CD4-positive, alpha-beta memory T cell (primary cell): ENCODE measurements at regions of chr6 and their contacts with region 1.

Region 1: GRCh38 chr6:127737009-127737486 is 160.1 kb downstream of the C6orf58 start:
- DNase-seq: peak; percentile 41 to 69 (median 64)
- H3K4me3 ChIP-seq: no peak overlapping the region
- H3K4me3 Mint-ChIP-seq: peak overlapping the region in 1 of 8 donors; percentile 48
- H3K27ac ChIP-seq: no peak overlapping the region
- H3K27ac Mint-ChIP-seq: peak overlapping the region in 6 of 7 donors; percentile 9 to 59 (median 52)
- H3K4me1 ChIP-seq: peaks cover 8% of the 10 kb centered on the region
- H3K4me1 Mint-ChIP-seq: peaks cover 33 to 59% (median 51%) of the 10 kb centered on the region in 4 donors
- H3K27me3 ChIP-seq: no peaks in the 10 kb centered on the region
- H3K27me3 Mint-ChIP-seq: no peaks in the 10 kb centered on the region

Region 2: GRCh38 chr6:127570739-127571389 is 166.2 kb before region 1 on chr6:
- CTCF ChIA-PET with region 1: no interaction called
- POLR2A ChIA-PET with region 1: no interaction called
- intact Hi-C with region 1: no loop called
- DNase-seq: no peak
- H3K4me3 ChIP-seq: no peak overlapping the region
- H3K4me3 Mint-ChIP-seq: no peak overlapping the region
- H3K27ac ChIP-seq: no peak overlapping the region
- H3K27ac Mint-ChIP-seq: peak overlapping the region in 1 of 7 donors; percentile 31
- H3K4me1 ChIP-seq: no peaks in the 10 kb centered on the region
- H3K4me1 Mint-ChIP-seq: peaks cover 6 to 9% (median 8%) of the 10 kb centered on the region in 4 donors
- H3K27me3 ChIP-seq: no peaks in the 10 kb centered on the region
- H3K27me3 Mint-ChIP-seq: no peaks in the 10 kb centered on the region

Region 3: GRCh38 chr6:127792616-127793015 is 55.6 kb after region 1 on chr6:
- CTCF ChIA-PET with region 1: no interaction called
- POLR2A ChIA-PET with region 1: no interaction called
- intact Hi-C with region 1: no loop called
- DNase-seq: peak in 4 of 5 donors; percentile 9 to 31 (median 22)
- H3K4me3 ChIP-seq: no peak overlapping the region
- H3K4me3 Mint-ChIP-seq: peak overlapping the region in 6 of 8 donors; percentile 21 to 72 (median 49)
- H3K27ac ChIP-seq: no peak overlapping the region
- H3K27ac Mint-ChIP-seq: peak overlapping the region in 6 of 7 donors; percentile 47 to 82 (median 73)
- H3K4me1 ChIP-seq: peaks cover 81% of the 10 kb centered on the region
- H3K4me1 Mint-ChIP-seq: peaks cover 68 to 93% (median 80%) of the 10 kb centered on the region in 4 donors
- H3K27me3 ChIP-seq: no peaks in the 10 kb centered on the region
- H3K27me3 Mint-ChIP-seq: no peaks in the 10 kb centered on the region

Region 4: DNA sequence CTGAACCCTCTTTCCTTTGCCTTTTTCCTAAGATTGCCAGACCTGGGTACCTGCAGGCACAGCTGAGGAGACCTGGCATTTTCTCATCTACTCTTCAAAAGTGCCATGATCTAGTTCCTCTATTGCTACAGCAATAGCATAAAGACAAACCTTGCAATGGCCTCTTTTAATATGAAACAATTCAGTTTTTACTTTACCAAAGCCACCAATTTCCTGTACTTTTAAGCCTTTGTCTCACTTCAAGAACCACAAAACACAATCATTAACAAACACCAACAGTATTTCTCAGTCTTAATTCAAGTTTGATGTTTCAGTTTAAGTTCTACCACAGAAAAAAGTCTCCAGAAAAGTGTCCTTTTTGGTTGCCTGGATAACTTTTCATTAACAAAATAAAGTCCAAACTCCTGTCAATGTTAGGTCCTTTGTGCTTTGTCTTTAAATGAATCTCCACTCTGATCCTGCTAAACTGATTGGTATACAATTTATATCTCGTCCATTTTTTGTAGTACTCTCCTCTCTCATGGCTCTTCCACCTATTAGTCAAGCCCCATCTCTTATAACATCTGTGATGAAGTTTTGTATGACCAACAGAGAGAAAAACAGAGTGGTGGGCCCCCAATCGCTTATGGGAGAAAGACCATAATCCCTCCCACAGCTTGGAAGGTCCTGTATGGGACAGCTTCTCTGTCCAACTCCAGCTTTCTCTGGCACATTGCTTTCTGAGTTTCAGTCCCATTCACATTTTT is 214.3 kb after region 1 on chr6:
- CTCF ChIA-PET with region 1: no interaction called
- POLR2A ChIA-PET with region 1: no interaction called
- intact Hi-C with region 1: no loop called
- DNase-seq: peak in 4 of 5 donors; percentile 61 to 73 (median 66)
- H3K4me3 ChIP-seq: peak overlapping the region; percentile 4 to 12
- H3K4me3 Mint-ChIP-seq: peak overlapping the region; percentile 69 to 88 (median 81)
- H3K27ac ChIP-seq: peak overlapping the region; percentile 14
- H3K27ac Mint-ChIP-seq: peak overlapping the region; percentile 83 to 91 (median 88)
- H3K4me1 ChIP-seq: peaks cover 66% of the 10 kb centered on the region
- H3K4me1 Mint-ChIP-seq: peaks cover 38 to 69% (median 55%) of the 10 kb centered on the region in 4 donors
- H3K27me3 ChIP-seq: no peaks in the 10 kb centered on the region
- H3K27me3 Mint-ChIP-seq: no peaks in the 10 kb centered on the region

Region 5: GRCh38 chr6:127971945-127972391 is 234.9 kb after region 1 on chr6:
- CTCF ChIA-PET with region 1: interaction called, 3 read pairs
- POLR2A ChIA-PET with region 1: no interaction called
- intact Hi-C with region 1: loop called (anchors 2 kb)
- DNase-seq: peak; percentile 81 to 89 (median 83)
- H3K4me3 ChIP-seq: peak overlapping the region in 1 of 2 donors; percentile 36
- H3K4me3 Mint-ChIP-seq: peak overlapping the region; percentile 87 to 95 (median 90)
- H3K27ac ChIP-seq: peak overlapping the region; percentile 71
- H3K27ac Mint-ChIP-seq: peak overlapping the region; percentile 92 to 98 (median 98)
- H3K4me1 ChIP-seq: peaks cover 64% of the 10 kb centered on the region
- H3K4me1 Mint-ChIP-seq: peaks cover 41 to 56% (median 46%) of the 10 kb centered on the region in 4 donors
- H3K27me3 ChIP-seq: no peaks in the 10 kb centered on the region
- H3K27me3 Mint-ChIP-seq: no peaks in the 10 kb centered on the region

Region 6: DNA sequence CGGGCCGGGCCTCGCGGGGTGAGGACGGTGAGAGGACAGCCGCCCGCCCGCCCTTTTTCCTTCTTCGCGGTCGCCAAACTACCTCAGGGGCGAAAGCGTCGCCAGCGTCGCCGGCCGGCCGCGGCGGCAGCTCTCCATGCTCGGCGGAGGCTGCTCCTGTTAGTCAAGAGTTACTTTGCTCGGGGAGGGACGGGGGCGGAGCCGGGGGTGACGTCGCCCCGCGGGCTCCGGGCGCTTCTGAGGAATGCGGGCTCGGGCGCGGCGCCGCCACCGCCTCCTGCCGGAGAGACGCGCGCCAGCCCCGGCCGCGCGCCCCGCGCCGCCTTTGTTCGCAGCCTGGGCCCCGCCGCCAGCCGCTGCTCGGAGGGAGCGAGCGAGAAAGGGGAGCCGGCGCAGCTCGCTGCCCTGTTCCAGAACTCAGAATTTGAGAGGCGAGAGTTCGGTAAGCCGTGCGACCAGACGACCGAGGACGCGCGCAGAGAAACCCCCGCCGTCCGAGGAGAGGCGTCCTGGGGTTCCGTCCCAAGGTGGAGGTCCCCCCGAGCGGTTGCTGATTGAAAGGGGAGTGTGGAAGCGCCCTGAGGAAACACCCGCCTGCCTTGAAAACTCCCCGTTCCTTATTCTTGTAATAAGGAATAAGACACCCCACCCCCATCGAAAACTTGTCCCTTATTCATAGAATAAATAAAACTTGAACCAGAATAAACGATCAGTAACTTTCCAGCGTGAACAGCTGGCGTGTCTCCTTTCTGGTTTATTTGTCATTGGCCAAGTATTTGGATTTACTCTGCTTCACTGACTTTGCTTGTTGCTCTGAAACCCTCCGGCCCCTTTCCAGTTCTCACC is 783.6 kb after region 1 on chr6 and contains the start of gene PTPRK:
- CTCF ChIA-PET with region 1: interaction called, 3 read pairs
- POLR2A ChIA-PET with region 1: no interaction called
- intact Hi-C with region 1: loop called (anchors 1 kb)
- DNase-seq: peak; percentile 77 to 88 (median 81)
- H3K4me3 ChIP-seq: peak within 1 kb of the TSS; percentile 59 to 71
- H3K4me3 Mint-ChIP-seq: peak within 1 kb of the TSS; percentile 85 to 96 (median 90)
- H3K27ac ChIP-seq: peak within 1 kb of the TSS; percentile 3
- H3K27ac Mint-ChIP-seq: peak within 1 kb of the TSS; percentile 58 to 87 (median 84)
- H3K4me1 ChIP-seq: peaks cover 23% of the 10 kb centered on the region
- H3K4me1 Mint-ChIP-seq: peaks cover 11 to 27% (median 19%) of the 10 kb centered on the region in 4 donors
- H3K27me3 ChIP-seq: peaks cover 37% of the 10 kb centered on the region
- H3K27me3 Mint-ChIP-seq: peaks cover 47 to 62% of the 10 kb centered on the region in 2 donors
- total RNA-seq, gene PTPRK: 0.47 to 0.61 TPM

Region 7: GRCh38 chr6:129251669-129252376 is 1514.8 kb after region 1 on chr6:
- CTCF ChIA-PET with region 1: interaction called, 3 read pairs
- POLR2A ChIA-PET with region 1: no interaction called
- intact Hi-C with region 1: loop called (anchors 2 kb)
- DNase-seq: peak; percentile 41 to 57 (median 46)
- H3K4me3 ChIP-seq: no peak overlapping the region
- H3K4me3 Mint-ChIP-seq: peak overlapping the region in 2 of 8 donors; percentile 10 to 25
- H3K27ac ChIP-seq: no peak overlapping the region
- H3K27ac Mint-ChIP-seq: no peak overlapping the region
- H3K4me1 ChIP-seq: peaks cover 5% of the 10 kb centered on the region
- H3K4me1 Mint-ChIP-seq: peaks cover 0 to 15% (median 9%) of the 10 kb centered on the region in 4 donors
- H3K27me3 ChIP-seq: no peaks in the 10 kb centered on the region
- H3K27me3 Mint-ChIP-seq: peaks cover 16 to 22% of the 10 kb centered on the region in 2 donors